Activated T-helper 2 cell treated with anti-CD3 and anti-CD28 coated beads, Interferon-gamma antibody, Interleukin-2, Interleukin-4, amounts not matched to agents 10 μg/mL and 5 μg/mL and 100 μg/mL, durations not matched to agents 14 hours and 24 hours and 36 hours (primary cell): ENCODE measurements at regions of chr2 and their contacts with region 1.

Region 1: DNA sequence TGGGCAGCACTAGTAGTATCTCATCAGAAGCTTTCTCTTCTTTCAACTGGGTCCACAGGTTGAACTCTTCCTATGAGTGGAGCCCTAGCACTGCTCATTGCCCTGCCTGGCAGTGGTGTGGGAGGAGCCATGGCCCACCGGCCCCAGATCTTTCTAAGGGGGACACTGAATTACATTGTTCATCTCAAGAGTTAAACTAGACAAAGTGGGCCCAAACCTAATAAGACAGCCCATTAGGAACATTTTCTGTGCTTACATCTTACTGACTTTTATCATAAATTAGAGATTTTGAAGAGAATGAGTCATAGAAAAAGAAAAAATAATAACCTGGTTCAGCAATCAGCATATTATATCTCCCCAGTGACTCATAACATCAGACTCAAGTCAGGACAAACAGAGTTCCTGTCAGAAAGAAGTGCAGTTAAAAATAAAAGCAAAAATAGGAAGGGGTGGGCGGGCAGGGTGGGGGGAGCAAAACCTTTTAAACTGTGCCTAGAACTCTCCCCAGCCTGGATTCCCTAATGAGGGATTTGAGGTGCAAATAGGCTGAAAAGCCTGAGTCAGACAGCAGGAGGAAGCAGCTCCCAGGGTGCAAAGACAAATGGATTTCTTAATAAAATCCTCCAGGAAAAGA is 161.6 kb upstream of the TRIB2 start:
- DNase-seq: no peak
- H3K4me3 Mint-ChIP-seq: peak overlapping the region; percentile 14
- H3K27ac Mint-ChIP-seq: peak overlapping the region; percentile 85
- H3K4me1 Mint-ChIP-seq: peaks cover 42% of the 10 kb centered on the region
- H3K27me3 Mint-ChIP-seq: no peaks in the 10 kb centered on the region

Region 2: GRCh38 chr2:11863513-11864328 is 691.4 kb before region 1 on chr2:
- intact Hi-C with region 1: loop called (anchors 10 kb)
- DNase-seq: peak; percentile 47
- H3K4me3 Mint-ChIP-seq: no peak overlapping the region
- H3K27ac Mint-ChIP-seq: no peak overlapping the region
- H3K4me1 Mint-ChIP-seq: peaks cover 9% of the 10 kb centered on the region
- H3K27me3 Mint-ChIP-seq: peaks cover 13% of the 10 kb centered on the region

Region 3: GRCh38 chr2:12430407-12431133 is 124.6 kb before region 1 on chr2:
- intact Hi-C with region 1: loop called (anchors 1 kb)
- DNase-seq: no peak
- H3K4me3 Mint-ChIP-seq: peak overlapping the region; percentile 18
- H3K27ac Mint-ChIP-seq: peak overlapping the region; percentile 63
- H3K4me1 Mint-ChIP-seq: peaks cover 29% of the 10 kb centered on the region
- H3K27me3 Mint-ChIP-seq: no peaks in the 10 kb centered on the region

Region 4: DNA sequence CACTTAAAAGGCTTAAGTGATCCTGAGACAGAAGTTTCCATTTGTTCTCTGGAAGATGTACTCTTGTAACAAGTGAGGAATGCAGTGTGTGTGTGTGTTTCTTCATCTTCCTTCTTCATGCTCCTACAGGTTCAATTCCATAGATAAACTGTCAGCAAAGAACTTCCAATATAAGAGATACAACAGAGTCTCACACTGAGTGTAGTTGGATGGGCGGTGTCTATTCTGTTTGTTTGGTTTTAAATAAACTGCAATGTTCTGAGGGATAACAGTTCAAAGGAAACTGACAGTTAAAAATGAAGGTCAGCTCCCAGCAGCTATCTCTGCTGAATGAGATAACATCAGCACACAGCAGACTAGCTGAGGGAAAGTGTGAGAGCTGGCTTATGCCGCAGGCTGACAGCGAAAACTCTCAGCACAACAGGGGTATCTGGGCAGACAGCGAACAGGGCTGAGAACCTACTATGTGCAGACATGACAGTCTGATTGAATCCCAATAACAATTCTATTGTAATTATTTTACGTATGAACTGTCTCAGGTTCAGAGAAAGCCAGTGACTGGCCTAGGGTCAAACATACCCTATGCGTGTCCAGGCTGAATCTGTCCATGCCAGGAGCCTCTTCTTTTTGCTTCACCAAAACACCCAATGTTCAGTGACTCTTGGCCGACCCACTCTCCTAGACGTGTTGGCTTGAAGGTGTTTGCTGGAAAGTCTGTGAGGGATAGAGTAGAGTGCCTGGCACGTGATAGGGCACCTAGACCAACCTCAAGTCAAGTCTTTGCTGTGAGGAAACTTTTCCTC is 40.3 kb before region 1 on chr2:
- intact Hi-C with region 1: loop called (anchors 2 kb)
- DNase-seq: peak; percentile 60
- H3K4me3 Mint-ChIP-seq: peak overlapping the region; percentile 35
- H3K27ac Mint-ChIP-seq: peak overlapping the region; percentile 77
- H3K4me1 Mint-ChIP-seq: peaks cover 47% of the 10 kb centered on the region
- H3K27me3 Mint-ChIP-seq: no peaks in the 10 kb centered on the region

Region 5: DNA sequence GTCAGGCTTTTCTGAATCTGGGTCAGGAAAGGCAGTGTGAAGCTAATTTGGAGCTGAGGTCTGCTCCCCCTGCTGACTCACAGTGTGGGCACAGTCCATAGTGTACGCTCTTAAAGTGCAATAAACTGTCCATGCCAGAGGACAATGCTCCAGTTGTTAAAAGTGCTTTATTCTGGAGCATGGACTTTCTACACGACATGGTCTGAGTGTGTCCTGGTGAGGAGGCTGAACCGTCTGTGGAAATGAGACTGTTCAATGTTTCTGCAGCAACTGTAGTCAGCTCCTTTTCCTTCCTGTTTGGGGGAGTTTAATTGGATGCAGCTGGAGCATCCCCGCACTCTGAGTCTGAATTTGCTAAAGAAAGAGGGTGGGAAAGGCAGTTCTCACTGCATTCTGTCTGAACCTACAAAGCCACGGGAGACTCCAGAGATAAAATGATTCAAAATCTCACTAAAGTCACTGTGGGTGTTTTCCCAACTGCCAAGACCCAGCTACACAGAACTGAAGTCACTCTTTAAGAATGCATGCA is 51.4 kb after region 1 on chr2:
- intact Hi-C with region 1: loop called (anchors 5 kb)
- DNase-seq: no peak
- H3K4me3 Mint-ChIP-seq: no peak overlapping the region
- H3K27ac Mint-ChIP-seq: no peak overlapping the region
- H3K4me1 Mint-ChIP-seq: peaks cover 16% of the 10 kb centered on the region
- H3K27me3 Mint-ChIP-seq: peaks cover 20% of the 10 kb centered on the region

Region 6: DNA sequence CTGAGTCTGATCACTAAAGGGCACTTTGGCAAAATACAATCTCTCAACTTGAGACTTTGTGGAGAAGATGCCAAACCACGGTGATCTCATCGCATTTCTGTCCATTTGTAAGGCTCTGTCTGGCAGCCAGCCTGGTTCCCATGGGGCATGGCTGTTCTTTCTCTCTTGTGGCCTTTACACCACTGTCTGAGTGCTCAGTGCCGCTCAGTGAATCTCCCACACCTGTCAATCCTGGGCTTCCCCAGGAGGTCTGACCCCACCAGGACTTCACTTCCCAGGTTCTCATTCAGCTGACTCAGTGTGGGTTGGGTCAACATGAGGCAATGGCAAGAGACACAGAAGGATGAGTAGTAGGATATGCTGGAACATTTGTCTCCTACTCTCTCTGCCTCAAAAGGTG is 64.8 kb after region 1 on chr2:
- intact Hi-C with region 1: no loop called
- DNase-seq: no peak
- H3K4me3 Mint-ChIP-seq: no peak overlapping the region
- H3K27ac Mint-ChIP-seq: no peak overlapping the region
- H3K4me1 Mint-ChIP-seq: peaks cover 20% of the 10 kb centered on the region
- H3K27me3 Mint-ChIP-seq: peaks cover 5% of the 10 kb centered on the region